Right cardiac atrium (tissue), 5 donors: ENCODE measurements at regions of chr1 and their contacts with region 1.

Region 1: GRCh38 chr1:55140546-55140983 is 74.6 kb downstream of the USP24 start:
- DNase-seq: peak in 2 of 3 donors; percentile 54 to 68
- ATAC-seq: peak; percentile 95 to 97
- H3K4me3 ChIP-seq: no peak overlapping the region
- H3K27ac ChIP-seq: no peak overlapping the region
- H3K4me1 ChIP-seq: no peaks in the 10 kb centered on the region
- H3K27me3 ChIP-seq: no peaks in the 10 kb centered on the region

Region 2: GRCh38 chr1:55215256-55216021 is 74.9 kb after region 1 on chr1 and contains the start of gene USP24:
- intact Hi-C with region 1: loop called in 1 of 4 experiments (anchors 10 kb)
- DNase-seq: peak; percentile 79 to 94 (median 92)
- ATAC-seq: peak; percentile 95 to 96
- H3K4me3 ChIP-seq: peak within 1 kb of the TSS; percentile 96
- H3K27ac ChIP-seq: peak within 1 kb of the TSS; percentile 99
- H3K4me1 ChIP-seq: peaks cover 5% of the 10 kb centered on the region
- H3K27me3 ChIP-seq: no peaks in the 10 kb centered on the region
- total RNA-seq, gene USP24: 32.6 to 35.7 (median 34.7) TPM

Region 3: DNA sequence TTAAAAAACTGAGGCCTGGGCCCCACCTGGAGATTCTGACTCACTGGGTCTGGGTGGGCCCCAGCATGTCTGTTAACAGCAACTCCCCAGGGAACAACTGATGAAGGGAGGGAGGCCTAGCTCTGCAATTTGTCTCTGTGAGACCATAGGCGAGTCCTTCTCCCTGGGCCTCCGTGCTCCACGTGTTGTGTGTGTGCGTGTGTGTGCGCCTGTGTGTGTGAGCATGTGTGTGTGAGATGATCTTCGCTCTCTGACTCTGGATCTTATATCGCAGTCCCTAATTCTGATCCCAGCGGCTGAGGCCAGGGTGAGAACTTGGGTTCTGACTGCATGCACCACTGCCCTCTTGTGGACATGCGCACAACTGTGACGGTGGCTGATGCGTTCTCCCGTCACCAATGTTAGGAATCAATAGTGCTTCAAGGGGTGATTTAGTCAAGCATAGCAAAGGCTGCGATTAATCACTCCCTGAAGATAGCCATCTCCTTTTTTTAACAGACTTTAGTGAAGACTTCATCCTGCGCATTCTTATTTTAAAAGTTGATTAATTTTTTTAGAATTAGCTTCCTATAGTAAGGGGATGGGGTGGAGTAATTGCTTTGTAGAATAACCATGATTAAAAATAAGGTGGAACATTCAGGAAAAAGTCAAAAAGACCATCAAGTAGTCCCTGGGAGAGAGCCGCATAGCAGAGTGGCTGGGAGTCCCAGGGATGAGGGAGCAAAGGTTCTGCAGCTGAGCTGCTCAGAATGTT is 137.0 kb after region 1 on chr1:
- intact Hi-C with region 1: loop called in 3 of 4 experiments (anchors 2 to 5 kb)
- DNase-seq: peak; percentile 89 to 93 (median 91)
- ATAC-seq: peak; percentile 87 to 90
- H3K4me3 ChIP-seq: no peak overlapping the region
- H3K27ac ChIP-seq: no peak overlapping the region
- H3K4me1 ChIP-seq: no peaks in the 10 kb centered on the region
- H3K27me3 ChIP-seq: no peaks in the 10 kb centered on the region

Region 4: GRCh38 chr1:56584910-56585528 is 1444.5 kb after region 1 on chr1:
- intact Hi-C with region 1: loop called in 1 of 4 experiments (anchors 10 kb)
- DNase-seq: no peak
- ATAC-seq: peak; percentile 54 to 67
- H3K4me3 ChIP-seq: no peak overlapping the region
- H3K27ac ChIP-seq: no peak overlapping the region
- H3K4me1 ChIP-seq: no peaks in the 10 kb centered on the region
- H3K27me3 ChIP-seq: no peaks in the 10 kb centered on the region